Dendritic cell treated with granulocyte-macrophage colony-stimulating factor and Interleukin-4, amounts not matched to agents 40 ng/mL and 50 ng/mL, for 4 days (primary cell): ENCODE measurements at regions of chr2 and their contacts with region 1.

Region 1: DNA sequence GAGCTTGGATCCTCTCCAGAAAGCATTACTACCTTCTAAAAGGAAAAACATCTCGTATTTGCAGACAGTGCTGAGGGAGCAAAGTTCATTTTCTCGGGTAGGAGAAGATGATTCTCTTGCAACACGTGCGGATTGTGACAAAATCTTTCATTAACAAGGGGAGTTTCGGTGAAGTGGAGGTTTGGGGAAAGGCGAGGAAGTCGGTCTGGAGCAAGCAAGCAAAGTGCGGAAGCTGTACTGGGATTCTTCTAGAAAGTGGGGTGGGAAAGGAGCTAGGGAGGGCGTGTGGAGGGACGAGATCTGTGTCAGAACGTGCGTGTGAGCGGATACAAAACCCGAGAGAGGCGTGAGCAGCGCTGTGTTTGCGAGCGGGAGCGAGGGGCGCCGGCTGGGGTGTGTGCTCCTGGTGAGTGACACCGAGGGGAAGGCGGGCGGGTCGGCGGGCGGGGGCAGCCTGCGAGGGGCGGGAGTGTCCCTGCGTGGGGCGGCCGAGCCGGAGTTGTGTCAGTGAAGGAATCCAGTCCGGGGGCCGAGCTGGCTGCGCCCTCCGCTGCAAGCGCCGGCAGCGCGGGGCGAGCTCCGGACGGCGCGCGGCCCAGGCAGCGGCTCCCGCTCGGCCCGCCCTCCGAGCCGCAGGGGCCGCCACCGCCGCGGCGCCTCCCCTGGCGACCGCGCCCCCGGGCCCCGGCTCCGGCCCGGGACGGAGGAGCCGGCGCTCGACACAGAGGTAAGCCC is at the start of gene SPATS2L:
- H3K4me3 Mint-ChIP-seq: peak within 1 kb of the TSS; percentile 84
- H3K27ac Mint-ChIP-seq: peak within 1 kb of the TSS; percentile 90
- H3K4me1 Mint-ChIP-seq: peaks cover 33% of the 10 kb centered on the region
- H3K27me3 Mint-ChIP-seq: peaks cover 6% of the 10 kb centered on the region

Region 2: GRCh38 chr2:199985625-199986207 is 320.6 kb before region 1 on chr2:
- intact Hi-C with region 1: loop called (anchors 5 kb)
- H3K4me3 Mint-ChIP-seq: no peak overlapping the region
- H3K27ac Mint-ChIP-seq: no peak overlapping the region
- H3K4me1 Mint-ChIP-seq: no peaks in the 10 kb centered on the region
- H3K27me3 Mint-ChIP-seq: no peaks in the 10 kb centered on the region

Region 3: GRCh38 chr2:200454927-200455801 is 148.8 kb after region 1 on chr2:
- intact Hi-C with region 1: loop called (anchors 10 kb)
- H3K4me3 Mint-ChIP-seq: no peak overlapping the region
- H3K27ac Mint-ChIP-seq: peak overlapping the region; percentile 95
- H3K4me1 Mint-ChIP-seq: peaks cover 46% of the 10 kb centered on the region
- H3K27me3 Mint-ChIP-seq: no peaks in the 10 kb centered on the region